ENCODE measurements at regions of chr3 and their contacts with region 1.

Region 1: DNA sequence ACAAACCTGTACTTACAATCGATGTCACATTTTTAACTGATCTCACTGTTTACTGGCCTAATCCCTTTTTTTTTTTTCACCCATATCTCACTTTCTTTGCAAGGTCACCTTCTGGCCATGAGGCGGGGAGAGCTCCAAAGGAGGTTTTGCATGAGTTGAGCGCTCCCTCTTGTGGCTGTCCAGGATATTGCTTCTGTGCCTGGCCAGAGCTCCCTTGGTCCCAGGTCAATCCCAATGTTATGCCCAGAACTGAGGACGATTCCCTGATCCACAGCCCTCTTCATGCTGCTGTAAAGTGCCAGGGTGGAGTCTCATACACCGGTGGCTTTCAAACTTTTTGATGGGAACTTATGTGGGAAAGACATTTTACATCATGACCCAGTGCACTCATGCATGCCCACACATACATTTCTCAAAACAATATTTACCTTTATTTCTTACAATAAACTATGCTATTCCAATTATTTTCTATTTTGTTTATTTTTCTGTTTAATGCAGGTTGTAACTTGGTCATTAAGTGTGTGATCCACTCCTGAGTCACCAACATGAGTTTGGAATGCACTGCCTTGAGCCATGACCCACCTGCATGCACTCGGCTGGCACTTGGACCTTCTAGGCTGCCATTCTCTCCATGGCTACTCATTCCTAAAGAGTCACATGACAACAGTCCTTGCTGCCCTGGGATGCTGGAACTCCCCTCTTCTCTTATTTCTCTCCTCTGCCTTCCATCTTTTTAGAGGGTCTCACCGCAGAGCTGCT is 9.6 kb upstream of the SST start:
- DNase-seq: peak; percentile 72
- H3K4me3 ChIP-seq: no peak overlapping the region
- H3K27ac ChIP-seq: no peak overlapping the region
- H3K4me1 ChIP-seq: no peaks in the 10 kb centered on the region
- CTCF ChIP-seq: peak; percentile 94

Region 2: DNA sequence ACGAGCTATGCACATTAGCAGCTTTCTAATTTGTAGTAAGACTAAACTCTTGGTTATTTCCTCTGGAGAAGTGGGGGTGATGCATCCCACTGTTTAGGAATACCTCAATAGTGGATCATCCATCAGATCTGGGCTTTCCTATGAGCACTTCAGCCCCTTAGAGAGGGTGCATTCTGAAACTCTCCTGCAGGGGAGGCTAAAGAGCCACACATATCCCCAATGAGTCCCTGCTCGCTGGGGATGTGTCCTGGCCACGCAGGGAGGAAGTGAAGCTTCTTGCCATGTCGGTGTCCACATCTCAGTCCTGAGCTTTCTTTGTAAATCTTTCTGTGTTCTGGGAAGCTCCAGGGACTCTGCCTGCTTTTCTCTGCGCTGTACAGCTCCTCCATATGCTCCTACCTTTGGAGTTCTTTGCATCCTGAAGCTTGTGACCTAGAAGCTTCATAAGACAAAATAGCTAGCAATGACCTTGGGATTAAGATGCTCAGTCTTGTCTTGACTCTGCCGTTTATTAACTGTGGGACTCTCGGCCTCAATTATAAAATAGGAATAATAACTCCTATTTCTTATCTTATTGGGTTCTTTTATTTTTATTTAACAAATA is 360.0 kb before region 1 on chr3:
- CTCF ChIA-PET with region 1: interaction called, 18 read pairs
- POLR2A ChIA-PET with region 1: no interaction called
- intact Hi-C with region 1: loop called (anchors 1 kb)
- DNase-seq: peak; percentile 60
- H3K4me3 ChIP-seq: no peak overlapping the region
- H3K27ac ChIP-seq: no peak overlapping the region
- H3K4me1 ChIP-seq: no peaks in the 10 kb centered on the region
- CTCF ChIP-seq: peak; percentile 80

Region 3: DNA sequence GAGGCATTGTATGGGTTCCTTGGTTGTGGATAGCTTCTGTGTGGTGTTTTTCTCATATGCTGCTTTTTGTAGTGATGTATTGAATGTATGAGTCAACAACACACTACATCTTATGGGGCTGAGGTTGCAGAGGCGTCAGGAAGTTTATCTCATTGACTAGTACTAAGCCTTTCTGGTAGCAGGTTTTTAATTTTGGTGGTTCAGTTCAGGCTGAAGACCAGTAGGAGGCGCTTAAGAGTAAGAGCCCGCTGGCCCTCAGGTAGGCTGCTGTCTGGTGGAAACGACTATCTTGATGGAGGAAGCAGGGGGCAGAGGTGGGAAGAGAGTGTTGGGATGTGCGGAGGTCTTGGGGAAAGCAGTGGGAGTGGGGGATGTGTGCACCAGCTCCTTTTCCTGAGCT is 249.2 kb before region 1 on chr3:
- CTCF ChIA-PET with region 1: no interaction called
- POLR2A ChIA-PET with region 1: no interaction called
- intact Hi-C with region 1: loop called (anchors 5 kb)
- DNase-seq: no peak
- H3K4me3 ChIP-seq: no peak overlapping the region
- H3K27ac ChIP-seq: no peak overlapping the region
- H3K4me1 ChIP-seq: no peaks in the 10 kb centered on the region
- CTCF ChIP-seq: peak; percentile 63

Region 4: DNA sequence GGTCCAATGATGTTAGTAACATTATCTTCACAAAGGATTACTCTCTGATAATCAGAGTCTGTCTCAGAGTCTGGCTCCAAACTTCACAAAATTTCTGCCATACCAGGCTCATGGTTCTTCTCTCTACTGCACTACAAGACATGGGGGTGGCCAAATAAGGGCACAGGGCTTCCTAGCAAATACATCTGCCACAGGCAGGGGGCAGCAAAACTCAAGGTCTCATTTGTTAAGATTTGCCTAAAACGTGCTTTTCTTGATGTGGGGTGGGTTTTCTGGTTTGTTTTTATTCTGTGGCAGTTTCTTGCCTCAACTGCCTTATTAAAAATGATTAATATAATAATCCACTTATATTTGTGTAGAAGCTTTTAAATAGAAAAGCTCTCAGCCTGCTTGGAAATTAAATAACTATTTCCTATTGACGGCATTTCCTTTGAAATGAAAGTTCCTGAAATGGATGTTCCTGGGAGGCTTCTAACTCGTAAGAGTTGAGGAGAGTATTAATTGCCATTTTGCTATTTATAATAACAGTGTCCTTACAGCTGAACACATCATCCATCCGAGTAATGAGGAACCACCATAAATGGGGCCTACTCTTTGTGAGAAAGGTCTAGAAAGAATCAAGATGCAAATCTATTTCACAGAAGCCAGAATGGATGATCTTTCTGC is 63.4 kb before region 1 on chr3:
- CTCF ChIA-PET with region 1: no interaction called
- POLR2A ChIA-PET with region 1: no interaction called
- intact Hi-C with region 1: loop called (anchors 1 kb)
- DNase-seq: peak; percentile 59
- H3K4me3 ChIP-seq: no peak overlapping the region
- H3K27ac ChIP-seq: no peak overlapping the region
- H3K4me1 ChIP-seq: no peaks in the 10 kb centered on the region
- CTCF ChIP-seq: peak; percentile 92

Region 5: DNA sequence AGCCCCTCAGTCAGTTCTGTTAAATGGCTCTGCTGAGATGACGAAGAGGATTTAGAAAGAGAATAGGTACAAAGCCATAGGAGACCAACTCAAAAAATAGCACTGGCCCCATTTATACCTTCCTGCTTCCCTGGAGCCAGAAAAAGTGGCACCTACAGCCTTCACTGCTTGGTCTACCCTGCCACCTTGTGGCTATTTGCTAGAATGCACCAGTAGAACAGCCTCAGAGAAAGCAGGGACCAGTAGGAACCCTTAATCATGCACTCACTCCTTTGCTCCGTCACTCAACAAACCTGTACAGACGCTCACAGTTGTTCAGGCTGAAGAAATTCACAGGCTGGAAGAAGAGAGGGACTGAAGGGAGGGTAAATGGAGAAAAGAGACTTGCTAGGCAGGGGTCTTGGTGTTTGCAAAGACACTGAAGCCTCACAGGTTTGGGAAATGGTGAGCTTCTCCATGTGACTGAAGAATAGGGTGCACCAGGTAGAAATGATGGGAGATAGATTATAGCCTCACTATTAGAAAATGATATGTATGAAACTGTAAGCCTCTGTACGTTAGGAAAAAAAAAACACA is 34.7 kb after region 1 on chr3:
- CTCF ChIA-PET with region 1: interaction called, 5 read pairs
- POLR2A ChIA-PET with region 1: interaction called, 3 read pairs
- intact Hi-C with region 1: loop called (anchors 1 kb)
- DNase-seq: peak; percentile 82
- H3K4me3 ChIP-seq: no peak overlapping the region
- H3K27ac ChIP-seq: no peak overlapping the region
- H3K4me1 ChIP-seq: peaks cover 13% of the 10 kb centered on the region
- CTCF ChIP-seq: peak; percentile 98

Measured in OCI-LY7 (cell line).